ENCODE measurements at regions of chr20 and their contacts with region 1.

Region 1: GRCh38 chr20:10469599-10469998 is 34.5 kb downstream of the SLX4IP start:
- H3K4me3 Mint-ChIP-seq: peak overlapping the region; percentile 48
- H3K27ac Mint-ChIP-seq: peak overlapping the region; percentile 94
- H3K4me1 Mint-ChIP-seq: peaks cover 52% of the 10 kb centered on the region
- H3K27me3 Mint-ChIP-seq: no peaks in the 10 kb centered on the region

Region 2: GRCh38 chr20:10453241-10453640 is 16.4 kb before region 1 on chr20:
- intact Hi-C with region 1: loop called (anchors 2 kb)
- H3K4me3 Mint-ChIP-seq: no peak overlapping the region
- H3K27ac Mint-ChIP-seq: peak overlapping the region; percentile 86
- H3K4me1 Mint-ChIP-seq: peaks cover 21% of the 10 kb centered on the region
- H3K27me3 Mint-ChIP-seq: no peaks in the 10 kb centered on the region

Region 3: DNA sequence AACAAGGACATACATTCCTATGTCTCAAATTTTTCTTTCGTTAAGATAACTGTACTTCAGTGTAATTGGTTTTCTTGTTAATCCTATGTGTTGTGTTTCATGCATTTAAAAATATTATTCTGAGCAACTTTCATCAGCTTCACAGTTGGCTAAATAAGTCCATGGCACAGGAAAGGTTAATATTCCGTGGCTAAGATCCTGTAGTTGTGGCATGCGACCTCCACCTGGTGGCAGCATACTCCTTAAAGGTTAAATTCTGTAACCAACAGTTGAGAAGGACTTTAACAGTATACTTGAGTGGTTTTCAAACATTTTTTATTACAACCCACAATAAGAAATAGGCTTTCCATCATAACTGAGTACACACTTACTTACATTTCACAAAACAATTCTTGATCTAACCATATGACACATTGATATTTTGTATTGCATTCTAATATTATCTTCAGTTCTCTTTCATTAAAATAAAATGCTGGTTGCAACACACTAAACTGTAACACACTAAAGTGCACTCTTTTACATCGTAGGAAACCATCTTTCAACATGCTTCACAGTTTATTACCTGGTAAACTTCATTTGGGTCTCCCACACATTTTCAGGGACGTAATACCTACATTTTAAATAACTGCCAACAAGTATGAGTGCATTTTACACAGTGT is 83.9 kb after region 1 on chr20:
- intact Hi-C with region 1: loop called (anchors 2 kb)
- H3K4me3 Mint-ChIP-seq: no peak overlapping the region
- H3K27ac Mint-ChIP-seq: no peak overlapping the region
- H3K4me1 Mint-ChIP-seq: peaks cover 39% of the 10 kb centered on the region
- H3K27me3 Mint-ChIP-seq: no peaks in the 10 kb centered on the region

Region 4: DNA sequence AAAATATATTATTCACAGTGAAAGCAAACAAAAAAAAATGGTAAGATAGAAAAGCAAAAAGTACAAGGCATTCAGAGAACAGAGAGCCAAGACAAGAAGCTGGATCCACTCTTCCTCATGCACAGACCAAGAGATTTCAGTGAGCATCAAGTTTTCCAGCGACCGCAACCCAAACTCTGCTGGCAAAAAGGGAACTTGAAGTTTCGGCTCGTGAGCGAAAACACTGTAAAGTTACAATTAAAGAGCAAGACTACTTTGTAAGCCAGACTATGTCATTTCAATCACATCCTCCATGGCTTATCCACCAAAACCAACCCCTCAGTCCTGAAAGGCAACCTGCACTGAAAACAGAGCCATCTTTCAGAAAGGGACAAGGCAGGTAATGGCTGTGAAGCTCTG is 193.5 kb after region 1 on chr20:
- intact Hi-C with region 1: loop called (anchors 2 kb)
- H3K4me3 Mint-ChIP-seq: no peak overlapping the region
- H3K27ac Mint-ChIP-seq: peak overlapping the region; percentile 27
- H3K4me1 Mint-ChIP-seq: peaks cover 59% of the 10 kb centered on the region
- H3K27me3 Mint-ChIP-seq: peaks cover 1% of the 10 kb centered on the region

Region 5: GRCh38 chr20:11204926-11205768 is 735.5 kb after region 1 on chr20:
- intact Hi-C with region 1: loop called (anchors 10 kb)
- H3K4me3 Mint-ChIP-seq: no peak overlapping the region
- H3K27ac Mint-ChIP-seq: peak overlapping the region; percentile 11
- H3K4me1 Mint-ChIP-seq: peaks cover 29% of the 10 kb centered on the region
- H3K27me3 Mint-ChIP-seq: peaks cover 1% of the 10 kb centered on the region

Region 6: GRCh38 chr20:11274141-11274594 is 804.6 kb after region 1 on chr20:
- intact Hi-C with region 1: loop called (anchors 1 kb)
- H3K4me3 Mint-ChIP-seq: no peak overlapping the region
- H3K27ac Mint-ChIP-seq: no peak overlapping the region
- H3K4me1 Mint-ChIP-seq: peaks cover 10% of the 10 kb centered on the region
- H3K27me3 Mint-ChIP-seq: peaks cover 1% of the 10 kb centered on the region

Measured in dendritic cell treated with granulocyte-macrophage colony-stimulating factor and Interleukin-4, amounts not matched to agents 40 ng/mL and 50 ng/mL, for 4 days (primary cell).